ENCODE measurements at regions of chr6 and their contacts with region 1.

Region 1: GRCh38 chr6:44475779-44476434 is 88.4 kb downstream of the CDC5L start:
- DNase-seq: peak; percentile 82
- H3K4me3 ChIP-seq: no peak overlapping the region
- H3K27ac ChIP-seq: no peak overlapping the region
- H3K4me1 ChIP-seq: no peaks in the 10 kb centered on the region
- H3K27me3 ChIP-seq: no peaks in the 10 kb centered on the region
- CTCF ChIP-seq: peak; percentile 89

Region 2: GRCh38 chr6:44649365-44650025 is 173.6 kb after region 1 on chr6:
- intact Hi-C with region 1: loop called (anchors 5 kb)
- DNase-seq: no peak
- H3K4me3 ChIP-seq: no peak overlapping the region
- H3K27ac ChIP-seq: no peak overlapping the region
- H3K4me1 ChIP-seq: no peaks in the 10 kb centered on the region
- H3K27me3 ChIP-seq: no peaks in the 10 kb centered on the region
- CTCF ChIP-seq: no peak